Cardiac septum (tissue), 1 donor: ENCODE measurements at regions of chr5 and their contacts with region 1.

Region 1: GRCh38 chr5:41193456-41194205 is 19.7 kb downstream of the C6 start:
- DNase-seq: peak; percentile 95

Region 2: DNA sequence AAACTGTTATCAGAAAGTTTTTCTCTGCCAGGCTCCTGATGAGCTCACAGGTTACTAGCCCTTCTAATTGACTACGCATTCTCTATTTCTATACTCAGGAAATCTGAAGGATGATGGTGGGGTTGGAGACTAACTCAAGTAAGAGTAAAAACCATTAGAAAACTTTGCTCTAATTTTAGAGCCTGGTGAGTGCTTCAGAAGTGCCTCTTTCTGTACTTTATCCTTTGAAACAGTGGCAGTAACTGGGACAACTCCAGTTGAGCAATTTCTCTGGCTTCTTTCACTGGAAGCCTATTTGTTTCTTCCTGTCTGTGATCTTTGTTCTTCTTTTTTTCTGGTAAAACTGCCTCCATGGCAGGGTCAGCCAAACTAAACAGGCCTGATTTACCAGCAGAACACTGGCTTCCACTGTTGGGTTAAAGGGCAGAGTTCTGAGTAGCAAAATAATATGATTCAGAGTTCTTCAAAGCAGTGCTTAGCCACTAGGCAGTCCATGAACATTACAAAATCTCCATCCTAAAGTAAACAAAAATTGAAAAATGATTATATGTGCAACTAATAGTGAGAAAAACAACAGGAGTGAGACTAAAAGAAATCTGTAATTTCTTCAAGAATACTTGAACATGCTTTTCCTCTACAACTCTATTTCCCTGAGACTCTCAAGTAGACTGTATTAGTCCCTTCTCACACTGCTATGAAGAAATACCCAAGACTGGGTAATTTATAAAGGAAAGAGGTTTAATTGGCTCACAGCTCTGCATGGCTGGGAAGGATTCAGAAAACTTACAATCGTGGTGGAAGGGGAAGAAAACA is 202.3 kb before region 1 on chr5:
- intact Hi-C with region 1: loop called (anchors 1 kb)
- DNase-seq: no peak

Region 3: GRCh38 chr5:41094873-41095272 is 98.8 kb before region 1 on chr5:
- intact Hi-C with region 1: loop called (anchors 5 kb)
- DNase-seq: no peak

Region 4: GRCh38 chr5:41127967-41128690 is 65.5 kb before region 1 on chr5:
- intact Hi-C with region 1: no loop called
- DNase-seq: no peak

Region 5: GRCh38 chr5:41264019-41264418 is 70.4 kb after region 1 on chr5:
- intact Hi-C with region 1: loop called (anchors 5 kb)
- DNase-seq: no peak

Region 6: DNA sequence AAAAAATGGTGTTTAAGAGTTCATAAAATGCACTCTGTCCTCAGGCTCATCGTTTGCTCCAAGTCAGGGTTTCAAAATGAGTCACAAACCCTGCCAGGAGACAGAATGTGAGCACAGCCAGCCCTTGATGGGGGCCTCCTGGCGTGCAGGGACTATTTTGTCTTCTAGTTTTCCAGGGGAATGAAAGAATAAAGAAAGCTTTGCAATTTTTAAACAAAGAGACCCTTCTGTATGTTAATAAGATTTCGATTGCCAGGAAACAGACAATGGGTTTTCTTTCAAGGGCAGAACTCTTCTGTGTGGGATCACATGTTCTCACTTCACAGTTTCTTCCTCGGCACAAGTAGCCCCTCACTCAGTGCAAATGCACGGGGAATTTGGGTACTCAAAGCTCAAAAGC is 141.1 kb after region 1 on chr5:
- intact Hi-C with region 1: loop called (anchors 10 kb)
- DNase-seq: no peak

Region 7: GRCh38 chr5:41524174-41524573 is 330.5 kb after region 1 on chr5:
- intact Hi-C with region 1: loop called (anchors 5 kb)
- DNase-seq: no peak

Region 8: GRCh38 chr5:41809128-41809527 is 615.5 kb after region 1 on chr5:
- intact Hi-C with region 1: no loop called
- DNase-seq: no peak